Activated naive CD4-positive, alpha-beta T cell treated with anti-CD3 and anti-CD28 coated beads for 36 hours (primary cell): ENCODE measurements at regions of chr2 and their contacts with region 1.

Region 1: GRCh38 chr2:237572021-237572741 is 5.8 kb downstream of the PRLH start:
- DNase-seq: peak; percentile 93
- H3K4me3 Mint-ChIP-seq: no peak overlapping the region
- H3K27ac Mint-ChIP-seq: no peak overlapping the region
- H3K4me1 Mint-ChIP-seq: peaks cover 5% of the 10 kb centered on the region
- H3K27me3 Mint-ChIP-seq: no peaks in the 10 kb centered on the region

Region 2: GRCh38 chr2:237154082-237154638 is 418.0 kb before region 1 on chr2:
- CTCF ChIA-PET with region 1: interaction called, 12 read pairs
- intact Hi-C with region 1: loop called (anchors 1 kb)
- DNase-seq: peak; percentile 72
- H3K4me3 Mint-ChIP-seq: no peak overlapping the region
- H3K27ac Mint-ChIP-seq: no peak overlapping the region
- H3K4me1 Mint-ChIP-seq: peaks cover 29% of the 10 kb centered on the region
- H3K27me3 Mint-ChIP-seq: no peaks in the 10 kb centered on the region

Region 3: DNA sequence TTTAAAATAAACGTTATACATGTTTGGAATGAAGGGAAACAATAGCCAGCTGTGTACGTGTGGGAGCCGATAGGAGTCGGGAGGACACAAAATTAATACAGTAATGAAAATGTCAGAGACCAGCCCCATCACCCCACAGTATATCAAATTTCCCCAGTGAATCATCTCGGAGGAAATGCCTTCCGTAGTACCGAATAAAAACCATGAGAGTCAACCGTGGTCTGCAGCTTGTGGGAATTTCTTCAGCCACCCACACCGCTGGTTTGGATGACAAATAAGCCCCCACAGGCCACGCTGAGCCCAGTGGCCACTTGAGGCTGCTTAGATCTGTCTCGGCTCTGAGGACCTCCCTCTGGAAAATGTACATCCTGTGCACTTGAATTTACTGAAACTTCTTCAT is 292.0 kb before region 1 on chr2:
- CTCF ChIA-PET with region 1: no interaction called
- intact Hi-C with region 1: no loop called
- DNase-seq: no peak
- H3K4me3 Mint-ChIP-seq: no peak overlapping the region
- H3K27ac Mint-ChIP-seq: no peak overlapping the region
- H3K4me1 Mint-ChIP-seq: no peaks in the 10 kb centered on the region
- H3K27me3 Mint-ChIP-seq: peaks cover 7% of the 10 kb centered on the region

Region 4: DNA sequence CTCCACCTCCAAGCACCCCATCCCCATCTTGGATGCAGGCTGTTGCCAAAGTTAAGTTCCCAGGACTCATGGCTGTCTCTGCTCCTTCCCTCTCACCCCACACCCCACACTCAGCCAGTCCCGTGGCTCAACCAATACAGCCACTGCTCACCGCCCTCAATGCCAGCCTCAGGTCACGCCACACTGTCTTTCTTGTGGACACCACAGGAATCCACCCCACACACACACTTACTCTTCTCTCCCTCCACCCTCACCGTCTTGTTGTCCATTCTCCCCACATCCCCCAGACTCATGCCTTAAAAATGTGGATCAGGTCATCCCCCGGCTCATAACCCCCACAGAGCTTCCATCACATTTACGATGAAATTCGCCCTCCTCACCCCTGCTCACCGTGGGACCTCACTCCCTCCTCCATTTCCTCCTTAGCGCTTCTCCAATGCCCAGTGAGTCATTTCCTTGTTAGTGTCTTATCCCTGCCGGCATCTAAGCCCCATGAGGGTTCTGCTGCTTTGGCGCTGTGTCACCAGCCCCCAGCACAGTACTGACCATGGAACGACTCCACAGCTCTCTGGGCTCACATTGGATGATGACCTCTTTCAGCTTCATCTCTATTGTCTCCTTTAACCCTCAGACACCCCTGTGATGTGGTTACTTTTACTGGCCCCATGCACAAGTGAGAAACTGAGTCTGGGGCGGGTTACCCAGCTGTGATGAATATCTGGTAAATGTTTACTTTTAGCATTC is 71.3 kb before region 1 on chr2:
- CTCF ChIA-PET with region 1: interaction called, 13 read pairs
- intact Hi-C with region 1: no loop called
- DNase-seq: no peak
- H3K4me3 Mint-ChIP-seq: no peak overlapping the region
- H3K27ac Mint-ChIP-seq: no peak overlapping the region
- H3K4me1 Mint-ChIP-seq: no peaks in the 10 kb centered on the region
- H3K27me3 Mint-ChIP-seq: peaks cover 17% of the 10 kb centered on the region

Region 5: GRCh38 chr2:237524631-237525030 is 47.5 kb before region 1 on chr2:
- CTCF ChIA-PET with region 1: interaction called, 10 read pairs
- intact Hi-C with region 1: no loop called
- DNase-seq: no peak
- H3K4me3 Mint-ChIP-seq: no peak overlapping the region
- H3K27ac Mint-ChIP-seq: no peak overlapping the region
- H3K4me1 Mint-ChIP-seq: no peaks in the 10 kb centered on the region
- H3K27me3 Mint-ChIP-seq: no peaks in the 10 kb centered on the region

Region 6: DNA sequence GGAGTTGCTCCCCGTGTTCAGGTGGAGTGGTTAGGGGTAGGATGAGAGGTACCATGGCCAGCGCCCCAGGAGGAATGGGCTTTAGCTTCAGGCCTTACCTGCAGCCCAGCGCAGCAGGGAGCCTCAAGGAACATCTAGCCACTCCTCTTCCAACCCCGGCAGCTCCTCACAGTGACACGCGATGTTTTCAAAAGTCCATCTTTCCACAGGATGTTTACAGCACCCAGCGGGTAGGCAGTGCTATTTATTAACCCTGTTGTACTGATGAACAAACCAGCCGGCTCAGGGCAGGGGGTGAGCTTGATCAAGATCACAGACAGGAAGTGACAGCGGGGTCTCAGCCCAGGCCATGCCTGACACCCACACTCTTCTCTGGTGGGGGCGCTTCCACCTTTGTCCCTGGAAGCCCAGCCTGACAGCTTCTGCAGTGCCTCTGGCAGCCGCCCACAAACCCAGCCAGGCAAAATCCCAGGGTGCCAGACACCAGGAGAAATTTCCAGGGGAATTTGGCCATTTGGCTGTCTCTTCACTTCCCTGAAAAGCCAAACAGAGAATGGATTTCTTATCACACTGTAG is 24.3 kb before region 1 on chr2:
- CTCF ChIA-PET with region 1: interaction called, 20 read pairs
- intact Hi-C with region 1: no loop called
- DNase-seq: no peak
- H3K4me3 Mint-ChIP-seq: no peak overlapping the region
- H3K27ac Mint-ChIP-seq: no peak overlapping the region
- H3K4me1 Mint-ChIP-seq: no peaks in the 10 kb centered on the region
- H3K27me3 Mint-ChIP-seq: no peaks in the 10 kb centered on the region